K562 (cell line): ENCODE measurements at regions of chr1 and their contacts with region 1.

Region 1: DNA sequence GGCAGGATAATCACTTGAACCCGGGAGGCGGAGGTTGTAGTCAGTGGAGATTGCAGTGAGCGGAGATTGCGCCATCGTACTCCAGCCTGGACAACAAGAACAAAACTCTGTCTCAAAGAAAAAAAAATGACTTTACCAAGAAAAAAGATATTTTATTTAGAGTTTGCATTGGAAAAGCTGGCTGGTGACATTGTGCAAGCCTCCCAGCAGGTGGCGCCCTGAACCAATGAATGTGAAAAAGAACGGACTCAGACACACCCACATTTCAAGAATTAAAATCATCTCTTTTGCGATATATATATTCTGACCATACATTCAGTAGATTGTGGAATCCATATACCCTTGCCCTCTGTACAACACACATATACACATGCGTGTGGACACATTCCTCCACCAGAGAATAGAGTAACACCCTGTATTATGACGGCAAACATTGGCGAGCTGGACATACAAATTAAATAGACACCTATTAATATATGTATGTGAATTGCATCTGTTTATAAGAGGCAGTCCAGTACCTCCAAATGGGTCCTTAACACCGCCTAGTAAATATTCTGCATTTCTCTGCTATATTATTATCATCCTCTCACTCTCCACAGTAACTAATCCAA is 39.0 kb upstream of the CADM3 start:
- DNase-seq: peak; percentile 64 to 73 (median 66)
- ATAC-seq: peak; percentile 79
- H3K4me3 ChIP-seq: no peak overlapping the region
- H3K27ac ChIP-seq: no peak overlapping the region
- H3K4me1 ChIP-seq: no peaks in the 10 kb centered on the region
- H3K27me3 ChIP-seq: peaks cover 0 to 7% of the 10 kb centered on the region in 2 experiments; a peak in 2 of 5 replicates
- CTCF ChIP-seq: peak; percentile 73 to 89 (median 83)
- EP300 ChIP-seq: no peak
- POLR2A ChIP-seq: no peak
- RAD21 ChIP-seq: peak; percentile 74 to 77

Region 2: DNA sequence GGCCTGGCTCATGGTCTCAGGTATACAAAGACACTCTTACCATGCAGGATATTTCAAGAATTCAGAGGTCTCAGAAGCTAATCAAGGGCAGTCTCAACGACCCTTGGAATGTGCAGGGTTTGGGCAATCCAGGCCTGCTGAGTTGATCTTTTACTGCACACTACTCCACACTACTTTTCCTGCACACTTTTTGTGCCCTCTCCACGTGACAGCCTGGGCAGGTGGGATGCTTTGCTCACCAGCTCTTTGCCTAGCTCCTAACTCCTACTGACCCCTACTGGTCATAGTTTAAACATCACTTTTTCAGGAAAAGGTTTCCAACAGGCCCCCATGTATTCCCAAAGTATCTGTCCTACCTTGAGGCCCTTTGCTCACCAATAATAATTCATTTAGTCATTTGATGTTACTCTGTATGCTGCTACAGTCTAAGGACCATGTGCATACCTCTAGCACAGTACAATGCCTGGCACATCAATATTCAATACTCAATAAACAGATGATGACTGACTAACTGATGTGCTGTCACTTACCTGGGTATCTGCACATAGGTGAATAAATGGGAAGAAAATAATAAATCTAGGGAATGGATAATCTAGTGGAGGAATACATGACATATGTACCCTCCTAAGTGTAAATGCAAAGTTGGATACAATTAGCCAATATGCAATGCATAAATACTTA is 658.0 kb after region 1 on chr1:
- CTCF ChIA-PET with region 1: no interaction called
- POLR2A ChIA-PET with region 1: no interaction called
- in situ Hi-C with region 1: no loop called
- intact Hi-C with region 1: loop called (anchors 5 kb)
- DNase-seq: peak; percentile 40 to 49 (median 48)
- ATAC-seq: peak; percentile 72; the same call in 2 of the 3 replicates
- H3K4me3 ChIP-seq: no peak overlapping the region
- H3K27ac ChIP-seq: no peak overlapping the region
- H3K4me1 ChIP-seq: no peaks in the 10 kb centered on the region
- H3K27me3 ChIP-seq: peaks cover 0 to 7% of the 10 kb centered on the region in 2 experiments; a peak in 3 of 5 replicates
- CTCF ChIP-seq: peak; percentile 45 to 75 (median 72)
- EP300 ChIP-seq: no peak
- POLR2A ChIP-seq: no peak
- RAD21 ChIP-seq: peak; percentile 38 to 68; a peak in 3 of 4 replicates